PC-9 (cell line): ENCODE measurements at regions of chr6 and their contacts with region 1.

Region 1: GRCh38 chr6:127120787-127121636 is 2.5 kb downstream of the RSPO3 start:
- DNase-seq: peak; percentile 60 to 73
- H3K4me3 ChIP-seq: no peak overlapping the region
- H3K27ac ChIP-seq: no peak overlapping the region
- H3K4me1 ChIP-seq: no peaks in the 10 kb centered on the region
- H3K27me3 ChIP-seq: peaks cover 34% of the 10 kb centered on the region
- CTCF ChIP-seq: peak; percentile 98

Region 2: DNA sequence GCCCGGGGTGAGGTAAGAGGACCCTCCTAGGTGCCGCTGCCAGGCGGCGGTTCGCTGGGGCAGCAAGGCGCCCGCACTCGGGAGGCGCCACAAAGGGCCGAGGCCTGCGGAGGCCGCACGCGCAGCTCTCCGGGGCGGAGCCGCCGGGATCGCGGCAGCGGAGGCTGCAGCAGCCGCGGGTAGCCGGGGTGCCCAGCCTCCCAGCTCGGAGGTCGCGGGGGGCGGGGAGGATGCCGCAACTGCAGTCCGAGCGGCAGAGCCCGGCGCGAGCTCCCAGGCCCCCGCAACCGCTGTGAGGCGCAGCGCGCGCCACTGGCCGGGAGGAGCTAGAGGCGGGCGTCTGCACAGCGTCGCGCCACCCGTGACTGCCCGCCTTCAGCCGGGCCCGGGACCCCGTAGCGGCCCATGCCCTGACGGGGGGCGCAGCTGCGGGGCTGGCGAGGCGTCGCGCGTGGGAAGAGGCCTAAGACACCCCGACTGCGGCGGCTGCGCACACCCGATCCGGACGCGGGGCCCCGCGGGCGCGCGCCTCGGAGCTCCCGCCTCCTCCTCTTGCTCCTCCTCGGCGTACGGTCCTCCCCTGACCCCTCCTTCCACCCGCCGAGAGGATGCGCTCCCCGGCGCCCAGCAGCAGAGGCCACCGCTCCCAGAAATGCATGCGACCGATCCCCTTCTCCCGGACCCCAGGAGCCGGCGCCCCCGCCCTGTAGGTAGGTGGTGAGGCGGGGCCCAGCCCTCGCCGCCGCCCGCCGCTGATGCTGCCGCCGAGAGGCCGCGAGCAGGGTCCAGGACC is 1330.5 kb before region 1 on chr6 and contains the start of gene NCOA7:
- CTCF ChIA-PET with region 1: no interaction called
- POLR2A ChIA-PET with region 1: no interaction called
- intact Hi-C with region 1: loop called (anchors 2 kb)
- DNase-seq: peak; percentile 50 to 78
- H3K4me3 ChIP-seq: peak within 1 kb of the TSS; percentile 75
- H3K27ac ChIP-seq: peak within 1 kb of the TSS; percentile 48
- H3K4me1 ChIP-seq: peaks cover 53% of the 10 kb centered on the region
- H3K27me3 ChIP-seq: no peaks in the 10 kb centered on the region
- CTCF ChIP-seq: no peak
- total RNA-seq, gene NCOA7: 47.6 and 51.0 TPM in 2 replicates

Region 3: DNA sequence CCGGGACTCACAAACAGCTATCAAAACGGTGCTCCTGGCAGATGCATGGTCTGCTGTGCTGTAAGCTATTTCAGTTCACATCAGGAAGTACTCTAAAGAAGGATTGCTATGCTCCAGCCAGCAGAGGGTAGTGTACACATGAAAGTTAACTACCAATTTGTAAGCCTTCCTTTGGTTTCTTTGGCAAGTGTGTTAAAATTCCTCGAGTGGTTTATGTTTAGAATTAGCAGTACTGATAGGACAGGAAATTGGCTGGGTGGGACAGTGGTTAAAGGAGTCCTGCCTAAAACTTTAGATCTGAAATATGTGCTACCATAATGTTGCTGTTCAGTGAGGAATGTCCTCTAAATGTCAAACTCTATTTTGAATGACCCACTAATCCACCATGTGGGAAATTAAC is 1087.3 kb before region 1 on chr6:
- CTCF ChIA-PET with region 1: no interaction called
- POLR2A ChIA-PET with region 1: interaction called, 3 read pairs
- intact Hi-C with region 1: loop called (anchors 2 kb)
- DNase-seq: peak in 1 of 2 experiments; percentile 59
- H3K4me3 ChIP-seq: no peak overlapping the region
- H3K27ac ChIP-seq: no peak overlapping the region
- H3K4me1 ChIP-seq: peaks cover 7% of the 10 kb centered on the region; the same call in 1 of the 2 replicates
- H3K27me3 ChIP-seq: no peaks in the 10 kb centered on the region
- CTCF ChIP-seq: peak; percentile 73

Region 4: DNA sequence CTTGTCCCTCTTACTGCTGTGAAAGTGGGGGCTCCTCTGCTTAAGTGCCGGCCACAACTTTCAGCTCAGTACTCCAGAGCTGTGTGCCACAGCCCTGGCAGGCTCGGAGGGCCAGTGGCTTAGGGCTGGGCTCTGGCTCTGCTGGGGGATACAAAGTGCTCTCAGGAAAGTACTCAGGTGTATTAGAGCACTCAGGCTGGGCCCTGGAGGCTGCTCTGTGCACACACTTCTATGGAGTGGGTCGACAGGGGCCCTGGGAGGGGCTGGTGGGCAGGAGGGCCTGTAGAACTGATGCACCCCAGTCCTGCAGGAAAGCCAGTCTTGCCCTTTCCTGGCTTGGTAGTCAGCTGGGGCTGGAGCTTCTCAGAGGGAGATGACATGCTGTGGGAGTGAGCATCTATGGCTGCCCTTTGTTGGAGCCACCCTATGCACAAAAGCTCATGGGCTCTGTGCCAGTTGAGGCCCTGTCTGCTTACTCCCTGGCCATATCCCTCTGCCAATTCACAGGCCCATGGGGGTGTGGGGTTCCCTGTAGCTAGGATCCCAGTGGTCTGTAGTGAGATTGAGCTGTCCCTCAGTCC is 759.1 kb before region 1 on chr6:
- CTCF ChIA-PET with region 1: interaction called, 7 read pairs
- POLR2A ChIA-PET with region 1: no interaction called
- intact Hi-C with region 1: loop called (anchors 1 kb)
- DNase-seq: no peak
- H3K4me3 ChIP-seq: no peak overlapping the region
- H3K27ac ChIP-seq: no peak overlapping the region
- H3K4me1 ChIP-seq: no peaks in the 10 kb centered on the region
- H3K27me3 ChIP-seq: no peaks in the 10 kb centered on the region
- CTCF ChIP-seq: no peak

Region 5: DNA sequence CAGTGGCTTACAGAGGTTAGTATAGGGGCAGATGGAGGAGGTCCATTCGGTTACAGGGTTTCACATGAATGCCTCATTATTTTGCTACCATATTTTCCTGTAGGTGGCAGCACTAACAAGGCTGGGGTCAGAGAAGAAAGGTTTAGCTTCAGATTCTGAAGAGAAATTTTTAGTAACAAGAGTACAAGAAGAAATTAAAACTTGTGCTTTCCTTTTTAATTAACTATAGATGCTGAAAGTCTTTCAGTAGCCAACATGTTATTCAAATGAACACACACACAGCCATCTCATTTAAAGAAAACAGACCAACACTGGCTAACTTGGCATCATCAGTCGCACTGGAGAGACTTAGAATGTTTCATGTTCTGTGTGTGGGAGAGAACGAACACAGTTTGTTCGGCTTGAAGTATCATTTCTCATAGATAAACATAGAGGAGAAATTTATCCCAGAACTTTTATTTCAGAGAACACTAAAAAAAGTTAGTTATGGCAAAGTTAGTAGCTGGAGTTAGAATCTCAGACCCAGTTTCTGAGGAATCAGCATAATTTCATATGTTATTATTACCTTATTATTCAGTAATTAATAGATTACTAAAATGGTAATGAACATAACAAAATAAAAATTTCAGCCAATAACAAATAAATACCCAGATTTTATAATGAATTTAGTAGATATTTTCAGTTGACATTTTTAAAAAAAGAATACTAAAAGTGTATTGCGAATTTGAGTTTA is 316.5 kb before region 1 on chr6:
- CTCF ChIA-PET with region 1: no interaction called
- POLR2A ChIA-PET with region 1: no interaction called
- intact Hi-C with region 1: loop called (anchors 2 kb)
- DNase-seq: peak in 1 of 2 experiments; percentile 10
- H3K4me3 ChIP-seq: no peak overlapping the region
- H3K27ac ChIP-seq: no peak overlapping the region
- H3K4me1 ChIP-seq: no peaks in the 10 kb centered on the region
- H3K27me3 ChIP-seq: no peaks in the 10 kb centered on the region
- CTCF ChIP-seq: peak; percentile 92

Region 6: GRCh38 chr6:127190552-127190951 is 69.5 kb after region 1 on chr6:
- CTCF ChIA-PET with region 1: no interaction called
- POLR2A ChIA-PET with region 1: no interaction called
- intact Hi-C with region 1: loop called (anchors 1 kb)
- DNase-seq: no peak
- H3K4me3 ChIP-seq: no peak overlapping the region
- H3K27ac ChIP-seq: no peak overlapping the region
- H3K4me1 ChIP-seq: no peaks in the 10 kb centered on the region
- H3K27me3 ChIP-seq: no peaks in the 10 kb centered on the region
- CTCF ChIP-seq: peak; percentile 81